Mucosa of descending colon (tissue), 3 donors: ENCODE measurements at regions of chr11 and their contacts with region 1.

Region 1: DNA sequence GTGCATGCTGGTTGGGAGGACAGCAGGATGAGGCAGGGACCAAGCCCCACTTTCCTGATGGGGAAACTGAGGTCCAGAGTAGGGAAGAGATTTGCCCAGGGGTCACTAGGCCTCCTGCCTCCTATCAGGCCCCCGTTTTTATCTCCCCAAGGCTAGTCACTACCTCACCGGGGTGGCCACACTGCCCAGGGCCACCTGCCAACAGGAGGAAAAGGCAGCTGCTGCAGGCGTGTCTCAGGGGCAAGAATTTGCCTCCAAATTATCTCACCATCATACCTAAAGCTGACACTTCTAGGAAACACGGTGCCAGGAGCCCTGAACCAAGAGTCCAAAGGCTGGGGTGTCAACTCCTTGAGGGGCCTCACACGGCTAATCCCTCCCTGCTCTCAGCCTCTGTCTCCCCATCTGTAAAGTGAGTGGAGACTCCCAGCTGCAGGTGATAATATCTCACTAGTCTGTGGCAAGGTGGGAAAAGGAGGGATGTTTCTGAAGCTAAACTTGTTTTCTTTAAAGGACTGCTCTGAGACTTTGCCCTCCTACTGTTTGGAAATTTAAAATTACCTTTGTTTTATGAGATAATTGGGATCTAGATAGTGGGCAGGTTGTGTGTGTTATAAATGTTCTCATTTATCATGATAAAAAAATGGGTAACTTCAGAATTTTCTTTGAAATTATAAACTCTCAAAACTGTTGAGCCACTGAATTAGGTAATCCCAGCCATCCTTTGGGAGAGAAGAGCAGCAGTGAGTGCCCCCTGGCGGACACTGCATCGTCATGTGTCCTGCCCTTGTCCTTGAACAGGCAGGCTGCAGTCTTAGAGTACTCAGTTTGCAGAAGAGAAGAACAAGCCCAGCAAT is 60.0 kb downstream of the MYO7A start:
- DNase-seq: peak; percentile 83 to 95 (median 90)
- ATAC-seq: peak; percentile 80
- H3K4me3 ChIP-seq: no peak overlapping the region
- H3K4me1 ChIP-seq: peaks cover 25% of the 10 kb centered on the region
- CTCF ChIP-seq: peak; percentile 80

Region 2: GRCh38 chr11:77047007-77047927 is 140.7 kb before region 1 on chr11:
- intact Hi-C with region 1: loop called in 1 of 2 experiments (anchors 10 kb)
- DNase-seq: peak in 2 of 3 donors; percentile 64 to 95
- ATAC-seq: peak; percentile 74
- H3K4me3 ChIP-seq: no peak overlapping the region
- H3K4me1 ChIP-seq: peaks cover 20% of the 10 kb centered on the region
- CTCF ChIP-seq: peak; percentile 53

Region 3: DNA sequence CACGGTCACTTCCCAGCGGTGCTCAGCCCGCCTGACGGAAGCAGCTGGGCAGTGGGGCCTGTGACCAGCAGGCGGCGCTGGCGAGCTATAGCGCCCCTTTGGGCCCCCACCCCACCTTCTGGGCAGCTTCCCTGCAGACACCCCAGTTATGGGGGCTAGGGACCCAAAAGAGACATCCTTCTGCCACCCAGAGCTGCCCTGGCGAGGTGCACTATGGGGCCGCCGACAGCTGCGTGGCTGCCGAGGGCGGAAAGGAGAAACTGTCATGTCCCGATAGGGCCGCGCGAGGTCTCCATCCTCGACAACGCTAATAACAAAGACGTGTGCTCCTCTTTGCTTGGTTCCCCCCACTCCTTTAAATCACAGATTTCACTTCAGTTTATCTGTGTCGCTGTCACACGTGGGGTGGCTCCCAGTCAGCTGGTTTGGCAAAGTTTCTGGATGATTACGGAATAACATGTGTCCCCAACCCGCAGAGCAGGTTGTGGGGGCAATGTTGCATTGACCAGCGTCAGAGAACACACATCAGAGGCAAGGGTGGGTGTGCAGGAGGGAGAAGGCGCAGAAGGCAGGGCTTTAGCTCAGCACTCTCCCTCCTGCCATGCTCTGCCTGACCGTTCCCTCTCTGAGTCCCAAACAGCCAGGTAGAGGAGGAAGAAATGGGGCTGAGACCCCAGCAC is 60.6 kb before region 1 on chr11:
- intact Hi-C with region 1: loop called in 1 of 2 experiments (anchors 5 kb)
- DNase-seq: peak; percentile 67 to 83 (median 76)
- ATAC-seq: peak; percentile 81
- H3K4me3 ChIP-seq: no peak overlapping the region
- H3K4me1 ChIP-seq: peaks cover 19% of the 10 kb centered on the region
- CTCF ChIP-seq: peak; percentile 98

Region 4: GRCh38 chr11:77547863-77548551 is 360.0 kb after region 1 on chr11:
- intact Hi-C with region 1: loop called in 1 of 2 experiments (anchors 10 kb)
- DNase-seq: peak in 1 of 3 donors; percentile 58
- ATAC-seq: peak; percentile 93
- H3K4me3 ChIP-seq: no peak overlapping the region
- H3K4me1 ChIP-seq: peaks cover 11% of the 10 kb centered on the region
- CTCF ChIP-seq: no peak